Activated naive CD4-positive, alpha-beta T cell treated with anti-CD3 and anti-CD28 coated beads for 36 hours (primary cell): ENCODE measurements at regions of chr14 and their contacts with region 1.

Region 1: DNA sequence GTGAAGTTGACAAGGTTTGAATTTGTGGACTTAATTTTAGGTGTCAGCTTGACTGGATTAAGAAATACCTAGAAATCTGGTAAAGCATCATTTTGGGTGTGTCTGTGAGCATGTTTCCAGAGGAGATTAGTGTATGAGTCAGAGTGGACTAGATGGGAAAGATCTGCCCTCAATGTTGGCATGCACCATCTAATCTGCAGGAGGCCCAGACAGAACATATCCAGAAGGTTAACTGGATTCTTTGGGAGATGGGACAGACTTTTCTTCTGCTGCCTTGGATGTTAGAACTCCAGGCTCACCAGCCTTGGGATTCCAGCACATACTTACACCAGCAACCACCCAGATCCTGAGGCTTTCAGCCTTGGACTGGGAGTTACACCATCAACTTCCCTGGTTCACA is 14.1 kb downstream of the SGPP1 start:
- DNase-seq: no peak
- H3K4me3 Mint-ChIP-seq: no peak overlapping the region
- H3K27ac Mint-ChIP-seq: no peak overlapping the region
- H3K4me1 Mint-ChIP-seq: peaks cover 30% of the 10 kb centered on the region
- H3K27me3 Mint-ChIP-seq: no peaks in the 10 kb centered on the region

Region 2: GRCh38 chr14:62420847-62421246 is 1292.9 kb before region 1 on chr14:
- CTCF ChIA-PET with region 1: no interaction called
- intact Hi-C with region 1: no loop called
- DNase-seq: no peak
- H3K4me3 Mint-ChIP-seq: no peak overlapping the region
- H3K27ac Mint-ChIP-seq: no peak overlapping the region
- H3K4me1 Mint-ChIP-seq: no peaks in the 10 kb centered on the region
- H3K27me3 Mint-ChIP-seq: no peaks in the 10 kb centered on the region

Region 3: DNA sequence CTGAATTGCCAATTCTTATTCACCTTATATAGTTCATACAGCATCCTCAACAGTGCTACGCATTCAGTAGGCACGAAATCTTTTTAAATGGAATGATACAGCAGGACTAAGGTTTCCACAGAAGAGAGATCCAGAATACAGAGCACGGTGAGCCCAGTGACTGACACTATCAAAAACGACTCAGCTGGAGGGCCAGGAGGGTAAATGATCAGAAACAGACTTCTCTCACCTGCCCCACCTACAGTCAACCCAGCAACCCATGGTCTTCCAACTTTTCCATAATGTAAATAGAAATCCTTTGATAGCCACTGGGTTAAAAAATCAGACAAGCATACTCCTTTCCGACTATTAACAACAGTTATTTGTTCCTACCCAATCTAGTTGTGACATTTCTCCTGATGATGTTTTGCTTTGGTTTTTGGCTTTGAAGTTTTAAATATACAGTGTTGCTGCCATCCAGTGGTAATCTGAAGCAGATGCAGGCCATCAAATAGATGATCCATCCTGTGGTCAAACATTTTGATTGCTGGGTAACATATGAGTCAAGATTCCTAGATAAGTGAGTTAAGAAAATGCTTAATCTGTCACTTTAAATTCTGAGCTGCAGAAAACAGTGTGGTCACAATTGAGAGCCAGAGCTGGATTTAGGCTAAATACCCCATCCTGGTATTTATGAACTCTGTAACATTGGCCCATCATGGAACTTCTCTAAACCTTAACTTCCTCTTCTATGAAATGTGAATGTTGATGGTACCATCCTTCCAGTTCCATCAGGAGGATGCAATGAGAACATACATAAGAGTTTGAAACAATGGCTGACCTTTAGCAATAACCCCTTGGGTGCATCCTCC is 437.0 kb before region 1 on chr14:
- CTCF ChIA-PET with region 1: no interaction called
- intact Hi-C with region 1: no loop called
- DNase-seq: no peak
- H3K4me3 Mint-ChIP-seq: no peak overlapping the region
- H3K27ac Mint-ChIP-seq: no peak overlapping the region
- H3K4me1 Mint-ChIP-seq: no peaks in the 10 kb centered on the region
- H3K27me3 Mint-ChIP-seq: peaks cover 2% of the 10 kb centered on the region

Region 4: GRCh38 chr14:63470962-63471793 is 242.6 kb before region 1 on chr14:
- CTCF ChIA-PET with region 1: no interaction called
- intact Hi-C with region 1: loop called (anchors 5 kb)
- DNase-seq: no peak
- H3K4me3 Mint-ChIP-seq: no peak overlapping the region
- H3K27ac Mint-ChIP-seq: no peak overlapping the region
- H3K4me1 Mint-ChIP-seq: peaks cover 60% of the 10 kb centered on the region
- H3K27me3 Mint-ChIP-seq: no peaks in the 10 kb centered on the region

Region 5: DNA sequence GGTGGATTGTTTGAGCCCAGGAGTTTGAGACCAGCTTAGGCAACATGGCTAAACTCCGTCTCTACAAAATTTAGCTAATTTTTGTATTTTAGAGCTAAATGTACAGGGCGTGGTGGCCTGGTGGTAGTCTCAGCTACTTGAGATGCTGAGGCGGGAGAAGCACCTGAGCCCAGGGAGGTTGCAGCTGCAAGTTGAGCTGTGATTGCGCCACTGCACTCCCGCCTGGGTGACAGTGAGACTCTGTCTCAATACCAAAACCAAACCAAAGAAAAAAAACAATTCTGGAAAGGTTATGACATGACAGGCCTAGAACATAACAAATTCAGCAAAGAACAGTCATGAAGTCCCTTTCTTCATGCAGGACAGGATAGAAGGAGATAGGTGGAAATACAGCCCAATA is 97.8 kb before region 1 on chr14:
- CTCF ChIA-PET with region 1: no interaction called
- intact Hi-C with region 1: no loop called
- DNase-seq: no peak
- H3K4me3 Mint-ChIP-seq: no peak overlapping the region
- H3K27ac Mint-ChIP-seq: no peak overlapping the region
- H3K4me1 Mint-ChIP-seq: peaks cover 46% of the 10 kb centered on the region
- H3K27me3 Mint-ChIP-seq: no peaks in the 10 kb centered on the region

Region 6: DNA sequence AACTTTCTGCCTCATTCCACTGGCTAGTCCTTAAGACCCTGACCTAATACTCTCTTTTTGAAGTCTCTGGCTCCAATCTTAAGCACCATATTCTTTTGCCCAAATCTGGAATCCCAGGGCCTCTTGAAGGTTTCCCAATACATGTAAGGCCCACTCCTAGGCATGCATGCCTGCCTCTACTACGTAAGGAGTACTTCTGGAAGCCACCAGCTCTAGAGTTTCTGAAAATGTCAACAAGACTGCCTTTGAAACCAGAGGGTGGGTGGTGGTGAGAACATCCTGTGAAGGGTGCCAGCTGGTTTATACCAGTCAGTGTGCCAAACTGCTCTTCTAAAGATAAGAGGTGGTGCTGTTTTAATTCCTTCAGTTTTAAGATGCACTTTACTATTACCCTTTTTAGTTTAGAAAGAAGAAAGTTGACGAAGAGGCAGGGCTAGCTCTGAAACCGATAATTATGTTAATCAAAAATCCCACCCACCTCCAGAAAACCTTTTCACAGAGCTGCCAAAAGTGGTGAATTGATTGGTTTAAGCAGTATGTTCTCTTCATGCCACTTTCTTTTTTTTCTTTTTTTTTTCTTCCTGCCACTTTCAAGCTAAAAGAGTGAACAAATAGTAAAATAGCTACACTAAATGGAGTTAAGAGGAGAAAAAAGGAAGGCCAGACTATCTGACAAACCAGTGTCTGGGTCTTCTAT is 63.4 kb before region 1 on chr14:
- CTCF ChIA-PET with region 1: interaction called, 6 read pairs
- intact Hi-C with region 1: loop called (anchors 2 kb)
- DNase-seq: peak; percentile 76
- H3K4me3 Mint-ChIP-seq: peak overlapping the region; percentile 34
- H3K27ac Mint-ChIP-seq: peak overlapping the region; percentile 97
- H3K4me1 Mint-ChIP-seq: peaks cover 50% of the 10 kb centered on the region
- H3K27me3 Mint-ChIP-seq: no peaks in the 10 kb centered on the region

Region 7: DNA sequence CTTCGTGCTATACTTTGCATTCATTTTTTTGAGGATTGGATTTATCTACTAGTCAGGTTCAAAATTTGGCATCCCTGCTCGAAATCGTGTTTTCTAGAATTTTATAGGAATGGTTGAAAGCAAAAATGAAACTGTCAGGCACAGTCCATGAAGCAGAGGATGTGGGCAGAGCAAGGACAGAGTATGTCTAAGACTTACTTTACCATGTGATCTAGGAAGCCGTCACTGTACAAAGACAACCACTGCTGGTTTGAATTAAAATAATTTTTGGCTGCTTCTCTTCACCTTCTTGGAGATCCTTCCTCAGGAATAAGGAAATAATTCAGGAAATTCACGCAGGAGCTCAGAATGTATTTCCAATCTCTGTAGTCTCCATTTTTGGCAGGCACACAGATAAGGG is 45.7 kb after region 1 on chr14:
- CTCF ChIA-PET with region 1: no interaction called
- intact Hi-C with region 1: no loop called
- DNase-seq: peak; percentile 13
- H3K4me3 Mint-ChIP-seq: peak overlapping the region; percentile 10
- H3K27ac Mint-ChIP-seq: peak overlapping the region; percentile 6
- H3K4me1 Mint-ChIP-seq: peaks cover 11% of the 10 kb centered on the region
- H3K27me3 Mint-ChIP-seq: no peaks in the 10 kb centered on the region